Natural killer cell (primary cell): ENCODE measurements at regions of chr9 and their contacts with region 1.

Region 1: GRCh38 chr9:114082017-114082762 is 4.1 kb upstream of the AMBP start:
- DNase-seq: peak; percentile 69 to 86
- ATAC-seq: peak; percentile 63 to 93 (median 70)
- H3K4me3 ChIP-seq: no peak overlapping the region
- H3K4me3 Mint-ChIP-seq: no peak overlapping the region
- H3K27ac ChIP-seq: no peak overlapping the region
- H3K27ac Mint-ChIP-seq: no peak overlapping the region
- H3K4me1 ChIP-seq: no peaks in the 10 kb centered on the region
- H3K4me1 Mint-ChIP-seq: no peaks in the 10 kb centered on the region
- H3K27me3 ChIP-seq: no peaks in the 10 kb centered on the region
- H3K27me3 Mint-ChIP-seq: peaks cover 0 to 3% of the 10 kb centered on the region in 2 donors
- CTCF ChIP-seq: peak; percentile 88

Region 2: GRCh38 chr9:113886466-113886865 is 195.7 kb before region 1 on chr9:
- intact Hi-C with region 1: no loop called
- DNase-seq: peak in 1 of 2 donors; percentile 11
- ATAC-seq: peak in 2 of 3 donors; percentile 50 to 71
- H3K4me3 ChIP-seq: peak overlapping the region; percentile 23
- H3K4me3 Mint-ChIP-seq: peak overlapping the region; percentile 88
- H3K27ac ChIP-seq: peak overlapping the region; percentile 60
- H3K27ac Mint-ChIP-seq: peak overlapping the region; percentile 71 to 75
- H3K4me1 ChIP-seq: peaks cover 10% of the 10 kb centered on the region
- H3K4me1 Mint-ChIP-seq: peaks cover 21 to 26% of the 10 kb centered on the region in 2 donors
- H3K27me3 ChIP-seq: no peaks in the 10 kb centered on the region
- H3K27me3 Mint-ChIP-seq: no peaks in the 10 kb centered on the region
- CTCF ChIP-seq: no peak

Region 3: GRCh38 chr9:114304416-114305188 is 222.4 kb after region 1 on chr9:
- intact Hi-C with region 1: loop called (anchors 1 kb)
- DNase-seq: peak in 1 of 2 donors; percentile 7
- ATAC-seq: no peak
- H3K4me3 ChIP-seq: no peak overlapping the region
- H3K4me3 Mint-ChIP-seq: no peak overlapping the region
- H3K27ac ChIP-seq: no peak overlapping the region
- H3K27ac Mint-ChIP-seq: no peak overlapping the region
- H3K4me1 ChIP-seq: peaks cover 5% of the 10 kb centered on the region
- H3K4me1 Mint-ChIP-seq: no peaks in the 10 kb centered on the region
- H3K27me3 ChIP-seq: no peaks in the 10 kb centered on the region
- H3K27me3 Mint-ChIP-seq: peaks cover 0 to 3% of the 10 kb centered on the region in 2 donors
- CTCF ChIP-seq: no peak